Panc1 (cell line): ENCODE measurements at regions of chr15 and their contacts with region 1.

Region 1: GRCh38 chr15:38740206-38740605 is 175.6 kb upstream of the RASGRP1 start:
- DNase-seq: no peak
- ATAC-seq: no peak
- H3K4me3 ChIP-seq: no peak overlapping the region
- H3K27ac ChIP-seq: no peak overlapping the region
- H3K4me1 ChIP-seq: no peaks in the 10 kb centered on the region
- H3K27me3 ChIP-seq: no peaks in the 10 kb centered on the region
- CTCF ChIP-seq: no peak

Region 2: DNA sequence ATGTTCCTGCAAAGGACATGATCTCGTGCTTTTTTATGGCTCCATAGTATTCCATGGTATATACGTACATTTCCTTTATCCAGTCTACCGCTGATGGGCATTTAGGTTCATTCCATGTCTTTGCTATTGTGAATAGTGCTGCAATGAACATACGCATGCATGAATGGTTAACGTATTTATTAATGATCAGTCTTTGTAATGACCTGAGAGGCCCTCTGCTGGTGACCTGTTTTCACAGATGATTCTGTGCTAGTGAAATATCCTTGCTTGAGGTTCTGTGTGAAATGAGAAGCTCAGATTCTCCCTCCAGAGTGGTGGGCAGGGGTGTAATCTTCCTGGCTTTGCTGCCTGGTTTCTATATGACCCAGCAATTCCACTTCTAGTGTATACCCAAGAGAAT is 15.4 kb before region 1 on chr15:
- CTCF ChIA-PET with region 1: no interaction called
- POLR2A ChIA-PET with region 1: no interaction called
- in situ Hi-C with region 1: no loop called
- intact Hi-C with region 1: loop called (anchors 2 kb)
- DNase-seq: no peak
- ATAC-seq: no peak
- H3K4me3 ChIP-seq: no peak overlapping the region
- H3K27ac ChIP-seq: no peak overlapping the region
- H3K4me1 ChIP-seq: no peaks in the 10 kb centered on the region
- H3K27me3 ChIP-seq: no peaks in the 10 kb centered on the region
- CTCF ChIP-seq: peak; percentile 21; the same call in 1 of the 2 replicates

Region 3: DNA sequence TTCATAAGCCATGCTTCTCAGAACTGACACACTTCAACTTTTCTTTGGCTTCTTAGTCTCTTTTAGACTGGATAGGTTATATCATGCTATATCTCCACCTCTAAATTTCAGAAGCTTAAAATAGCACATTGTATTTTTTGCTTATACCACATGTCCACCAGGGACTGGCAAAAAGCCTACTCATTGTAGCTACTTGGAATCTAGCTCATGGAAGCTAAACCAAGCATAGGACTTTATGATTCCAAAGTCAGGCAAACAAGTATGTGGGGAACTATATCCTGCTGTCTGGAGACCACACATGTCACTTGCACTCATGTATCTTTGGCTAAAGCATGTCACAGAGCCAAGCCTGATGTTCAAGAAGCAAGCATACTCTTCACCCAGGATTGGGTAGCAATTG is 69.4 kb after region 1 on chr15:
- CTCF ChIA-PET with region 1: no interaction called
- POLR2A ChIA-PET with region 1: no interaction called
- in situ Hi-C with region 1: no loop called
- intact Hi-C with region 1: no loop called
- DNase-seq: no peak
- ATAC-seq: no peak
- H3K4me3 ChIP-seq: no peak overlapping the region
- H3K27ac ChIP-seq: no peak overlapping the region
- H3K4me1 ChIP-seq: no peaks in the 10 kb centered on the region
- H3K27me3 ChIP-seq: no peaks in the 10 kb centered on the region
- CTCF ChIP-seq: no peak

Region 4: GRCh38 chr15:38853608-38854007 is 113.4 kb after region 1 on chr15:
- CTCF ChIA-PET with region 1: no interaction called
- POLR2A ChIA-PET with region 1: no interaction called
- in situ Hi-C with region 1: no loop called
- intact Hi-C with region 1: no loop called
- DNase-seq: no peak
- ATAC-seq: no peak
- H3K4me3 ChIP-seq: no peak overlapping the region
- H3K27ac ChIP-seq: no peak overlapping the region
- H3K4me1 ChIP-seq: no peaks in the 10 kb centered on the region
- H3K27me3 ChIP-seq: no peaks in the 10 kb centered on the region
- CTCF ChIP-seq: peak; percentile 28; the same call in 1 of the 2 replicates